Mucosa of descending colon (tissue), 3 donors: ENCODE measurements at regions of chr4 and their contacts with region 1.

Region 1: GRCh38 chr4:94127707-94128328 is 79.8 kb upstream of the SMARCAD1 start:
- DNase-seq: peak in 1 of 3 donors; percentile 3
- ATAC-seq: peak; percentile 71
- H3K4me3 ChIP-seq: no peak overlapping the region
- H3K4me1 ChIP-seq: no peaks in the 10 kb centered on the region
- CTCF ChIP-seq: peak; percentile 36

Region 2: GRCh38 chr4:93791570-93792195 is 336.1 kb before region 1 on chr4:
- intact Hi-C with region 1: loop called (anchors 10 kb)
- DNase-seq: peak in 2 of 3 donors; percentile 36 to 73
- ATAC-seq: peak; percentile 90
- H3K4me3 ChIP-seq: no peak overlapping the region
- H3K4me1 ChIP-seq: no peaks in the 10 kb centered on the region
- CTCF ChIP-seq: peak; percentile 34

Region 3: DNA sequence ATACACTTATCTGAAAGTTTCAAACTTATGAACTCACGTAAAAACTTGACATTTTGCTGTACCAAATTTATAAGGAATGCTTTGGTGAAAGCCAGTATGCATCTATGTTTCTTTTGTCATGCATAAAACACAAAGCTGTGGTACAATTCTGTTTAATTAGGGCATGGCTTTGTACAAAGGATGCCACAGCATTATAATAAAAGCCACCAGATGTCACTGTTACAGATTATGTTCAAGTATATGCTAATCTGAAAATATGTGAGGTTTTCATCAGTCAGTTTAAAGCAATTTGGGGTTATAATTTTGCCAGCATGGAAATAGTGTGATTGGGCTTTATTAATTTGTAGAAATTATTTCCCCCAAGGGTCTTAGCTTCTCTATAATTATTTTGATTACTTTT is 230.3 kb before region 1 on chr4:
- intact Hi-C with region 1: loop called in 1 of 2 experiments (anchors 10 kb)
- DNase-seq: peak in 1 of 3 donors; percentile 19
- ATAC-seq: peak; percentile 51
- H3K4me3 ChIP-seq: no peak overlapping the region
- H3K4me1 ChIP-seq: peaks cover 6% of the 10 kb centered on the region
- CTCF ChIP-seq: peak; percentile 19

Region 4: DNA sequence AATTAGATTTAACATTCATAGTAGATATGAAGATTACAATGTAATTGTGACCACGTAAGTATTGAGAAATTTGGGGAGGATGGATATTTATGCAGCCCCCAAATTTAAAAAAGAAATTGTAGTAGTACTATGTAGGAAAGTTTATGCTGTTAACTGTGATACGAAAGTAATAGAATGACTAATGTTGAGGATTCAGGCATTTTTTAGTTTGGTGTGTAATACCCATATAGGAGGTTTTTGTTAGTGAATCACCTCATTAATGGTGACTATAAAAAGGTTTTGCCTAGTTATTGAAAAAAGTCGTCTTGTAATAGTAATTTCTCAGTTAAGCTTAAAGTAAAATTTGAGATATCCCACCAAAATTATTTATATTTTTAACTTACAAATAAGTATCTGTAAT is 147.1 kb after region 1 on chr4:
- intact Hi-C with region 1: no loop called
- DNase-seq: no peak
- ATAC-seq: no peak
- H3K4me3 ChIP-seq: no peak overlapping the region
- H3K4me1 ChIP-seq: no peaks in the 10 kb centered on the region
- CTCF ChIP-seq: no peak

Region 5: DNA sequence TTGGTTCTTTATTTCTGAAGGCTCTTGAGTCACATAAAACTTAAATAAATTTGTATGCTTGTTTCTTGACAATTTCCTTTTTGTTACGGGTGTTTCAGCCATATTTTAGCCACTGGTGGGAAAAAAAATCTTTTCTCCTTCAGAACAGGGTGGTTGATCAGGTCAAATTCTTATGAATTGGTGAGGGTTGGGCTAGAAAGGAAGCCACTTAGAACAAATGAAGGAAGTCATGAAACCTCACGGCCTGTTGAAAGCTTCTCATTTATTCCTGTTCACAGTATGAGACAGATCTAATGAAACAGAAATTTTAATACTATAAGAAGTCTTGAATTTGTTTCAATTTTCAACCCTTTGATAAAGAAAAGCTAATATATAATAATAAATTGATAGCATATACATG is 311.8 kb after region 1 on chr4:
- intact Hi-C with region 1: no loop called
- DNase-seq: no peak
- ATAC-seq: no peak
- H3K4me3 ChIP-seq: no peak overlapping the region
- H3K4me1 ChIP-seq: no peaks in the 10 kb centered on the region
- CTCF ChIP-seq: no peak